AG04450 (cell line): ENCODE measurements at regions of chr12 and their contacts with region 1.

Region 1: DNA sequence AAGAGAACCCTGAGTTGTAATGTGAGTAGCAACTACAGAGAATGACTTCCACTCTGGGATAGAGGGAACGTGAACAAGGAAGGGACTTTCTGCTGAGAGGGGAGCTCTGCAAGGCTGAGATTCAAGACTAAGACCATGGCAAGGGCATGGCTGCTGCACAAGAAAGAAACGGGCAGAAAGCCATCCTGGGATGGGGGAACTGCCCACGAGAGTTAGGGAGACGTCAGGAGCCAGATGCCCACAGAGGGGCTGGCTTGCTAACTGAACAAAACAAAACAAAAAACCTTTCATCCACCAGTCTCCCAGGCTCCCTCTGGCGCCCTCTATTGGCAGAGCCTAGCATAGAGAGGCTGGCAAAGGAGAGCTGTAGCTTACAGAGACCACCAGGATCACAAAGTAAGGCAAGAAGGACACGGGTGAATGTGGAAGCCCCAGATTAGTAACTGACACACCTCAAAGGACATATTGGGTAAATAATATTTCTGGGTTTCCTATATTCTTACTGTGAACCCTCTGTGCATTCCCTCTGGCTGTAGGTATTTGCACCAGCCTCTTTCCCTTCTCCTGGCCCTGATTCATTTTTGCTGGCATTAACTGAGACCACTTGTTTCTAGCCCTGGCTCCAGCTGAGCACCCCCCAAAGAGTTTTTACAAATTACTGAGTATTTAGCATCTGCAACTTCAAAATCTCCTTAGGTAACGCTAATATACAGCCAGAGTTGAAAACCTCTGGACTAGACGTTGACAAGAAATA is 338.3 kb downstream of the EMP1 start:
- DNase-seq: peak; percentile 10
- H3K4me3 ChIP-seq: peak overlapping the region; percentile 41
- H3K27ac ChIP-seq: no peak overlapping the region
- H3K27me3 ChIP-seq: no peaks in the 10 kb centered on the region
- CTCF ChIP-seq: peak; percentile 98

Region 2: DNA sequence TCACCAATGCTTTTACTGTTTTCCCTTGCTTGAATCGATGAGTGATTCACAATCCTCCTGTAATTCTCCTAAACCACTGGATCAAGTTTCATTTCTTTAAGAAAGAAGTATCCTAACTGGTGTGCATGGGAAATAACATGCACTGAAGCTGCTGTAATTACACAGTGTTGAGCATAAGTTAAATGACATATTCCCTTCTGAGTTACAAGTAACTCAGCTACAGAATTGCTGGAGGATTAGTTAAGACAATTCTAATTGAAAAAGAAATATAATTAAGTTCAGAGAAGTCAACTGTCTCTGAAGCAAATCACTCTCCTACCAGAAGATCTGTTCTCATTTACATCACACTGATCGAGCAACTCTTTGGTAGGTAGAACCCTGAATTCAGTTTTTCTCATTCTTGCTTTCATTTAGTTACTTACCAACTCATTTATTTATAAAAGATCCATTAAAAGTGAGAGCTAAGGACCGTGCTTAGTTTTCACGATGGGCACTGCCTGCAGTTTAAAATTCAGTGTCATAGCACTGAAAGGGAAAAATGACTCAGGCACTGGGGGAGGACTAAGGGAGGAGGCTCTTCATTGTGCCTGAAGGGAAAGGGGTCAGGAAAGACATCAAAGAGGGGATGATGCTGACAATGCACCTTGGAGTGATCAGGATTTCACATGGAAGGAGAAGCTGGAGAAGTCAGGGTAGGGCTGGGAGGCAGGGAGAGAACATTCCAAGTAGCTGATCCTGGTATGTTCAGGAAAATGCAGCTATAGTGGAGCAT is 11.1 kb before region 1 on chr12:
- CTCF ChIA-PET with region 1: interaction called, 17 read pairs
- POLR2A ChIA-PET with region 1: no interaction called
- DNase-seq: no peak
- H3K4me3 ChIP-seq: no peak overlapping the region
- H3K27ac ChIP-seq: no peak overlapping the region
- H3K27me3 ChIP-seq: no peaks in the 10 kb centered on the region
- CTCF ChIP-seq: no peak

Region 3: DNA sequence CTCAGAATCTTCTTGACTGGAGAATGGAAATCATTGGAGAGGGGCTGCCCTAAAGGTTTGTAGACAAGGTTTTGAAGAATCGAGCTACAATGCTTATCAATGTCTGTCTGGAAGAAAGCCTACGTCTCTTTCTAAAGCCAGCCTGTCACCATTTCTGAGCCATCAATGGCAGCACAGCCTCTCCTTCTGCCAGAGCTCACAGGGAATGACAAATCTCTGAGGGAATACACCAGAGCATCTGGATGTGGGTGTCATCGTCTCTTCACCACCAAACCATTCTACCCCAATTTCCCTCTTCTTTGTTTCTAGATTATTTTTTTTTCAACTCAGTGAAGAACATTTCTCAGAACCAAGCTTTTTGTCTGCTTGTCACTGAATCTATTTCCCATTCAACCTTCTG is 11.4 kb after region 1 on chr12:
- CTCF ChIA-PET with region 1: interaction called, 42 read pairs
- POLR2A ChIA-PET with region 1: no interaction called
- DNase-seq: no peak
- H3K4me3 ChIP-seq: no peak overlapping the region
- H3K27ac ChIP-seq: no peak overlapping the region
- H3K27me3 ChIP-seq: no peaks in the 10 kb centered on the region
- CTCF ChIP-seq: no peak